ENCODE measurements at regions of chr6 and their contacts with region 1.

Region 1: DNA sequence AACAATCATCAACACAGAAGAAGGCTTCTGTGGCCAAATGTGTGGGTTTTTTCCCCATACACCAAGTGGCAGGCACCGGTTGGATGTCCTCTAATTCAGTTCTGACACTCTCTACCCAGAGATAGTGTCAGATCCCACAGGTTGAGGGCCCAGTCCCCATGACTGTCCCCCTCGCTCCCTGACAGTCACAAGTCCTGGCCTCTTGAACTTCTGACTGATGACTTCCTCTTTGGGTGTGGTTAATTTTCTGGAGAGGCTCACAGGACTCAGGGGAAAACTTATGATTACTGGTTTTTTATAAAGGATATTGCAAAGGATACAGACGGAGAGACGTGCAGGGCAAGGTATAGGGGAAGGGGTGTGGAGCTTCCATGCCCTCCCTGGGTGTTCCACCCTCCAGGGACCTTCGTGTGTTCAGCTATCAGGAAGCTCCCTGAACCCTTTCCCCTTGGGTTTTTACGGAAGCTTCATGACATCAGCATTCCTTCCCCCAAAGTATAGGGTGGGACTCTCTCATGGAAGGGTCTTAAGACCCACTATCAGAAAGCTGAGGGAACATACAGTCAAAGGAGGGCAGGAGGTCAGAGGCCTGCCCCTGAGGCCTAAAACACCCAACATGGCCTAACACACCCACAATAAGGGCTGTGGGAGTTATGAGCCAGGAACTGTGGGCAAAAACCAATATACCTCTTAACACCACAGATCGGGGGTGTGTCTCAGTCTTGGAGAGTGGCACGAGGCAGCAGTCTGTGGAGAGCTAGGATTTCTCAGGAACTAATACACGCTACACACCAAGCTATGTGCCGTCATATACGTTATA is 33.3 kb downstream of the FARS2 start:
- DNase-seq: no peak

Region 2: DNA sequence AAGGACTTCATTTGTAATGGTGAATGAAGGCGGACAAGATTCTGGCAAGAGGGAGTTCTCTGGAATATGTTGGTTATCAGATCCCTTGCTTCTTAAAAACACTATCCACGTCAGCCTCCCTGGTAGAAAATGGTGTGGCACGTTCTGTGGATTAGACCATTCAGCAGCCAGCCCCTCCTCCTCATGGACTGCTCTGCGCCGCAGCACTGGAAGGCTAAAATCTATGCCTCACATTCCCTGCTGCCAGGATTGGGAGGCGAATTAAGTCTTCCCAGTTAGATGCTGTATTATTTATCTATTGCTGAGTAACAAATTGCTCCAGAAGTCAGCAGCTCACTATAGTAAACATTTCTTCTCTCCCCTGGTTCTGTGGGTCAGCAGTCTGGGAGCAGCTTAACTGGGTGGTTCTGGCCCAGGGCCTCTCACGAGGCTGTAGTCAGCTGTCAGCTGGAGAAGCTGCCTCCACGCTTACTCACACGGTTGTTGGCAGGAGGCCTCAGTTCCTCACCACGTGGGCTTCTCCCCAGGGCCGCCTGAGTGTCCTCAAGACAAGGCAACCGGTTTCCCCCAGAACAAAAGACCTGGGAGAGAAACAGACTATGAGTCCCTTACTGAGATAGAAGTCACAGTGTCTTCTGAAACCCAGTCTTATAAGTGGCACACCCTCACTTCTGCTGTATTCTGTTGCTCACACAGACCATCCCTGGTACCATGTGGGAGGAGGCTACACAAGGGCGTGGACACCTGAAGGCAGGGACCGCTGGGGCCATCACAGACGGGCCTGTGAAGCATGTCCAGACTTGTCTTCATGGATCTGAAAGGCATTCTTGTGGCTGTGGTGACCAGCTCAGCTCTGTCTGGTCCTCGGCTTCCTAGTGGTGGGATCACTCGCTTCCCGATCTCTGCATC is 611.1 kb after region 1 on chr6:
- intact Hi-C with region 1: loop called in 1 of 2 experiments (anchors 5 kb)
- DNase-seq: peak; percentile 96